ENCODE measurements at regions of chr3 and their contacts with region 1.

Region 1: GRCh38 chr3:125967138-125967537 is 1.8 kb upstream of the ROPN1B start:
- DNase-seq: no peak
- ATAC-seq: no peak

Region 2: DNA sequence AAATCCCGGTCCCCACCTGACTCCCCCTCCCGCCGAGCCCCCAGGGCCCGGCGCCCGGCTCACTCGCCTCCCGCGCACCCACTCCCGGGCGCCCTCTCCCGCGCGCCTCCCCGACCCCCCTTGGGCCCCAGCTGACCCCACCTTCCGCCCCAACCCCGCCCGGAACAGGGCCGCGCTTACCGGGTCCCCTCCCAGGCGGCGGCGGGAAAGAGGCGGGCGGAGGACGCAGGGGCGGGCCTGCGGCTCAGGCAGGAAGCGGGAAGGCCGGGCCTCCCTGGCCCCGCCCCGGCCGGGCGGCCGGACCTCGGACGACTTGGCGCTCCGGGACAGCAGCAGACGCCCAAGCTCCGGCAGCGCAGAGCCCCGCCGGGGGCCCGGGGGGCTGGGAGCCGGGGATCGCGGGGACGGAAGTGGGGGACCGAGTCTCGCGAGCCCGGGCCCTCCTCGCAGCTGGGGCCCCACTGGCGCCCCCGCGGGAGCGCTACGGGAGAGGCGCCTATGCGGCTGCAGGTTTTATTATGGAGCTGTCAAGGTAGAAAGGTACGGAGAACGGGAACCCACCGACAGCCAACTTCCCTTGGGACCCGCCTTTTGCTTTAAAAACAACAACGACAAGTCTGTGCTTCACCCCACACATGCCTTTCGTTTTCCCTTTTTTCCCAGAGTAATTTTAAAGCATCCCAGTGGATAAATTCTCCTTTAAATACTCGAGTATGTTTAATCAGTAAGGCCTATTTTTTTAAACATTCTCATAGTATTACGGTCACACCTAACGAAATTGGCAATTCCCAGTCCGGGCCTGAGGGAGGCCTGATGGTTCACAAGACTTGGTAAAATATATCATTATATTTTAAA is 117.0 kb after region 1 on chr3 and contains the start of gene SLC41A3:
- intact Hi-C with region 1: loop called in 1 of 2 experiments (anchors 10 kb)
- DNase-seq: peak; percentile 93
- ATAC-seq: peak; percentile 98 to 99
- total RNA-seq, gene SLC41A3: 31.1 to 34.0 TPM